Gastrocnemius medialis (tissue), 4 donors: ENCODE measurements at regions of chr10 and their contacts with region 1.

Region 1: DNA sequence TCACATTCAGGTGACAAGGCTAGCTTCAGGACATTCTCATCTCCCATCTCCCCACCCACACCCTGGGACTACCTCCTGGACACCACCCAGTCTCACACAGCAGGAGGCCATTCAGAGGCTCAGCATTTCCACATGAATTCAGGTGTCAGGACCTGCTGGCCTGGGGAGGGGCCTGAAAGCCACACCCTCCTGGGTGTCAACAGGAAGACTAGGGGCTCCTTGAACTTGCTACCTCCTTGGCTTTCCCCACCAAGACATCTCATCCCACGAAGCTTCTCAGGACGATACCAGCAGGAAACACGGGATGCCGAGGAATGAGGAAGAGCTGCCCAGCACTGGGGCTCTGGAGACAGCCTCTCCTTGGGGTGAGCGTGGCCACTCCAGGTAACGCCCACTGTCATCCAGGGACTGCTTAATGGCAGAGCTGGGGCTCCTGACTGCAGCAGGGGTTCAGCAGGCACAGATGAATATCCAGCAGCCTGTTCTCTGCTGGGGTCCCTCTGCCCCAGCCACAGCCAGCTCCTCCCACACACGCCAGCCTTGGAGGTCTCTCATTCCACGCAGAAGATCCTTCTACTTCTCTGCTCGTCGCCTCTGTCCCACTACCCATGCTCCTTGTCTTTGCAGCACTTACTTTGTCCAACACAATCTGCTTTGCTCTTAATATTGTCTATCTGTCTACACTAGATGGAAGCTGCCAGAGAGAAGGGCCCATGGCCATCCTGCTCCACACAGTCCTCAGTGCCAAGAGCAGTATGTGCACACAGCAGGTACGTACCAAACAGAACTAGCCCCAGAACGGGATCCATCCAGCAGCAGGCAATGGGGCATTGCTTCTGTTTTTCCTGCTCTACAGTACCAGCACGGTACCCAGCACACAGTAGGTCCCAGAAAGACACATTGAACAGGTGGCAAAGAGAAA is 88.7 kb downstream of the FAM53B start:
- DNase-seq: no peak
- ATAC-seq: no peak
- H3K4me3 ChIP-seq: no peak overlapping the region
- H3K27ac ChIP-seq: peak overlapping the region in 2 of 4 donors; percentile 68 to 84
- H3K4me1 ChIP-seq: peaks cover 36 to 81% of the 10 kb centered on the region in 2 donors
- H3K27me3 ChIP-seq: no peaks in the 10 kb centered on the region
- CTCF ChIP-seq: no peak
- POLR2A ChIP-seq: no peak

Region 2: DNA sequence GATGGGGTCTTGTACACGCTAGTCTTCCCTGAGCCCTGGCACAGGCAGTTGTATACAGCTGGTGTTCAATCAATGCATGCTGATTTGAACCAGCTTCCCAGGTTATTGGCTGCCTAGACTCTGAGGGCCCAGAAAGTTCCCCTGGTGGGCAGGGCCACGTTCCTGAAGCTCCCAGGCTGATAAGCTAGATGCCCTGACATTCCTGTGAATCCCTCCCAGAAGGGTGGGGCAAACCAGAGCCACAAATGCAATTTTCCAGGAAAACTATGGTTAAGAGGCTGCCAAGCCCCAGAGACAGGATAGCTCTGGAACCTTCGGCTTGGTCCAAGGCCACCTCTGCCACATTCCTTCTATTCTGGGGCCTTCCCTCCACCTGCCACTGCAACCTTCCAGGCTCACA is 10.5 kb after region 1 on chr10:
- in situ Hi-C with region 1: no loop called
- intact Hi-C with region 1: loop called (anchors 1 kb)
- DNase-seq: no peak
- ATAC-seq: no peak
- H3K4me3 ChIP-seq: no peak overlapping the region
- H3K27ac ChIP-seq: no peak overlapping the region
- H3K4me1 ChIP-seq: peaks cover 46 to 67% of the 10 kb centered on the region in 2 donors
- H3K27me3 ChIP-seq: no peaks in the 10 kb centered on the region
- CTCF ChIP-seq: no peak
- POLR2A ChIP-seq: no peak

Region 3: GRCh38 chr10:125038637-125039036 is 383.2 kb after region 1 on chr10:
- in situ Hi-C with region 1: no loop called
- intact Hi-C with region 1: no loop called
- DNase-seq: peak; percentile 72 to 90
- ATAC-seq: peak; percentile 88
- H3K4me3 ChIP-seq: peak overlapping the region in 1 of 4 donors; percentile 9
- H3K27ac ChIP-seq: peak overlapping the region; percentile 67 to 76 (median 72)
- H3K4me1 ChIP-seq: peaks cover 68 to 74% of the 10 kb centered on the region in 2 donors
- H3K27me3 ChIP-seq: no peaks in the 10 kb centered on the region
- CTCF ChIP-seq: peak in 2 of 5 experiments; percentile 26 to 44
- POLR2A ChIP-seq: no peak

Region 4: GRCh38 chr10:125132344-125132743 is 476.9 kb after region 1 on chr10:
- in situ Hi-C with region 1: no loop called
- intact Hi-C with region 1: no loop called
- DNase-seq: peak in 1 of 2 donors; percentile 34
- ATAC-seq: no peak
- H3K4me3 ChIP-seq: no peak overlapping the region
- H3K27ac ChIP-seq: peak overlapping the region; percentile 91 to 97 (median 97)
- H3K4me1 ChIP-seq: peaks cover 84 to 90% of the 10 kb centered on the region in 2 donors
- H3K27me3 ChIP-seq: no peaks in the 10 kb centered on the region
- CTCF ChIP-seq: no peak
- POLR2A ChIP-seq: no peak